ENCODE measurements at regions of chr1 and their contacts with region 1.

Region 1: GRCh38 chr1:92980732-92981647 is 19.7 kb upstream of the DIPK1A start:
- DNase-seq: peak in 7 of 9 donors; percentile 69 to 91 (median 86)
- ATAC-seq: peak; percentile 98
- H3K4me3 ChIP-seq: peak overlapping the region; percentile 24
- H3K4me3 Mint-ChIP-seq: peak overlapping the region; percentile 5 to 83 (median 67)
- H3K27ac ChIP-seq: peak overlapping the region; percentile 81
- H3K27ac Mint-ChIP-seq: peak overlapping the region; percentile 93 to 99 (median 98)
- H3K4me1 ChIP-seq: peaks cover 19 to 33% of the 10 kb centered on the region in 2 donors
- H3K4me1 Mint-ChIP-seq: peaks cover 13 to 62% (median 26%) of the 10 kb centered on the region in 7 donors
- H3K27me3 ChIP-seq: no peaks in the 10 kb centered on the region
- H3K27me3 Mint-ChIP-seq: no peaks in the 10 kb centered on the region

Region 2: DNA sequence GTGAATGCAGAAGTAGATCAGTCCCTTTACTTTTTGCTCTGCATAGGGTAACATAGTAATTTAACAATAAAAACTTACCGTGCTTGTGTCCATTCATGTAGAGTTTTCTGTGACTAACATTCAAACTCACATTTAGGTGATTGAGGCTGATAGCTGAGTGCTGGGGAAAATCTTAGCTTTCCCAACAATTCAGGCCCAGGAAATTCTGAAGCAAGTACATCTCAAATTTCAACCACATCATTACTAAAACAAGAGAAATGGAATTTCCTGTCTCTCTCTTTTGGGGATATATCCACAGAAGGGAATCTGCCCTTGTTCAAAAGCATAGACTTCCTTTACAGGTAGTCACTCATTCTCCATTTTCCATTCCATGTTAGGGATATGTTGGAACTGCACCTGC is 796.4 kb before region 1 on chr1:
- CTCF ChIA-PET with region 1: no interaction called
- POLR2A ChIA-PET with region 1: no interaction called
- intact Hi-C with region 1: no loop called
- DNase-seq: no peak
- ATAC-seq: no peak
- H3K4me3 ChIP-seq: no peak overlapping the region
- H3K4me3 Mint-ChIP-seq: no peak overlapping the region
- H3K27ac ChIP-seq: no peak overlapping the region
- H3K27ac Mint-ChIP-seq: no peak overlapping the region
- H3K4me1 ChIP-seq: no peaks in the 10 kb centered on the region
- H3K4me1 Mint-ChIP-seq: peaks cover 0 to 1% (median 0%) of the 10 kb centered on the region in 7 donors
- H3K27me3 ChIP-seq: no peaks in the 10 kb centered on the region
- H3K27me3 Mint-ChIP-seq: no peaks in the 10 kb centered on the region

Region 3: DNA sequence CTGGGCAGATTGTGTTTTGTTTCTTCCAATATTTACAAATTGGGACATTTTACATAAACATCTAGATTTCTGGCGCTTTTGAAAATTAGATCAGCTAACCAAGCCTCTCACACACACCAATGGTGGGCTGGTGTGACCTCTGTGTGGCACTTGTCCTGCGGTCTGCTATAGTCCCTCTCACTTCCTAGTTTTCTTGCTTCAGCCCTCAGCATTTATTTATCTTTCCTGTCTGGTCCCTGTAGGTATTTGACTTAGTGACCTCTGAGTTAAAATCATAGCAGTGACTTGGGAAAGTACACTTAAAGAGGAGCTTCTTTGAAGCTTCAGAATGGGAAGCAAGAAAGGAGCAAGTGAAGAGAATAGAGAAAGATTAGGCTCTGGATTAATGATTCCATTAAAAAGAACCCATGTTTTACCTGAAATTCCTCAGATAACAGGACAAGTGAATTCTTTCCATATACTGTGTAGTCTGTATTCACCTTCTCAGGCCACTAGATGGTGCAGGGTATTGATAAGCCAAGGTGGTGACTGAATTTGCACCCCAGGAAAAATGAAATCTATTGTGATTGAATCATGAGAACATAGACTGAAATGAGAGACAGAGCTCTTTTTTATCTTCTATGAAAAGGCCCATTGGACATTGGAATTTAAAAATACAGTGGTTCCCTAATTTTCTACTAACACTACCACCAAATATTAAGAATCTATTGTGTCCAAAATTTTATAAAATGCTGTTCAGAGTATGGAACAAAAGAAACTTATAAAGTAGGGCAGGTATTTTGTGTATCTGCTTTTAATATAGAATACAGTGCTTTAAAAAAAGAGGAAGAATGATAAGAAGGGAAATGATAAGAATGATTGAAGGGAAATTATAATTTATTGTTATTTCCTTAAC is 12.6 kb before region 1 on chr1:
- CTCF ChIA-PET with region 1: interaction called, 33 read pairs
- POLR2A ChIA-PET with region 1: interaction called, 113 read pairs
- intact Hi-C with region 1: loop called (anchors 1 kb)
- DNase-seq: peak in 7 of 9 donors; percentile 22 to 60 (median 41)
- ATAC-seq: peak; percentile 72
- H3K4me3 ChIP-seq: no peak overlapping the region
- H3K4me3 Mint-ChIP-seq: no peak overlapping the region
- H3K27ac ChIP-seq: no peak overlapping the region
- H3K27ac Mint-ChIP-seq: peak overlapping the region in 7 of 9 donors; percentile 6 to 69 (median 44)
- H3K4me1 ChIP-seq: peaks cover 29 to 45% of the 10 kb centered on the region in 2 donors
- H3K4me1 Mint-ChIP-seq: peaks cover 22 to 33% (median 31%) of the 10 kb centered on the region in 7 donors
- H3K27me3 ChIP-seq: no peaks in the 10 kb centered on the region
- H3K27me3 Mint-ChIP-seq: no peaks in the 10 kb centered on the region

Region 4: DNA sequence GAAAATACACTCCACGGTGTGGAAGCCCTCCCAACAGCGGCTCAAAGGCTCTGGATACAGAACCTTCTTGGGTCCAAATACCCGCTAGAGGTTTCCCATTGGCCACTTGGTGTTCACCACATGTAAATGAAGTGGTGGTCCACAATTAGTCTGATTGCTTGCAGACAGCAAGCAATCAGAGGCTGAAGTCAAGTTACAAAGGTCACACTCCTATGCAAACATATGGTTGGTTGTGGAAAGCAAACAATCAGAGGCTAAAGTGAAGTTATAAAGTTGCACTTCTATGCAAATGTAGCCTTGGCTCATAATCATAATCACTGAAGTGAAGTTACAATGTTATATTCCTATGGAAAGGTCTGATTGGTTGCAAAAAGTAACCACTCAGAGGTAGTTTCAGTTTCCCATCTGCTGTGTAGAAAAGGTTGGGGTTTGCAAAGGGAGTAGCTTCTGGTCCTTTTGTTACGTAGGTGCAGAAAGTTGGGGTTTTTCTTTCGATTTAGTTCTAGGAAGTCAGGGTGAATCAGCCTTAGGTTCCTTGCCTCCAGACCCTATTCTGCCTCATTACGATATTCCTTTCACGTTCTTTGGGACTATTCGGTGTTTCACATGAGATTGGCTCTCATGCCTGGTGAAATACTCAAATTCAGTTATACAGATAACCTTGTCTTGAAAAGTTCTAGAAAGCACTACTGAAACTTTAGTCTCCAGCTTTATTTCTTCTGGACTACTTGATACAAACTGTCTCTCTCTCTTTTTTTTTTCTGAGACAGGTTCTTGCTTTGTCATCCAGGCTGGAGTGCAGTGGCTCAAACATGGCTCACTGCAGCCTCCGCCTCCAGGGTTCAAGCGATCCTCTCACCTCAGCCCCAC is 61.4 kb after region 1 on chr1:
- CTCF ChIA-PET with region 1: interaction called, 4 read pairs
- POLR2A ChIA-PET with region 1: interaction called, 4 read pairs
- intact Hi-C with region 1: loop called in 1 of 2 experiments (anchors 1 kb)
- DNase-seq: peak in 8 of 9 donors; percentile 27 to 87 (median 79)
- ATAC-seq: peak; percentile 99
- H3K4me3 ChIP-seq: peak overlapping the region; percentile 38
- H3K4me3 Mint-ChIP-seq: peak overlapping the region; percentile 42 to 89 (median 82)
- H3K27ac ChIP-seq: peak overlapping the region; percentile 78
- H3K27ac Mint-ChIP-seq: peak overlapping the region; percentile 88 to 98 (median 94)
- H3K4me1 ChIP-seq: peaks cover 9 to 10% of the 10 kb centered on the region in 2 donors
- H3K4me1 Mint-ChIP-seq: peaks cover 7 to 38% (median 14%) of the 10 kb centered on the region in 7 donors
- H3K27me3 ChIP-seq: no peaks in the 10 kb centered on the region
- H3K27me3 Mint-ChIP-seq: no peaks in the 10 kb centered on the region

Measured in naive thymus-derived CD4-positive, alpha-beta T cell (primary cell).